Ascending aorta (tissue), 2 donors: ENCODE measurements at regions of chr2 and their contacts with region 1.

Region 1: DNA sequence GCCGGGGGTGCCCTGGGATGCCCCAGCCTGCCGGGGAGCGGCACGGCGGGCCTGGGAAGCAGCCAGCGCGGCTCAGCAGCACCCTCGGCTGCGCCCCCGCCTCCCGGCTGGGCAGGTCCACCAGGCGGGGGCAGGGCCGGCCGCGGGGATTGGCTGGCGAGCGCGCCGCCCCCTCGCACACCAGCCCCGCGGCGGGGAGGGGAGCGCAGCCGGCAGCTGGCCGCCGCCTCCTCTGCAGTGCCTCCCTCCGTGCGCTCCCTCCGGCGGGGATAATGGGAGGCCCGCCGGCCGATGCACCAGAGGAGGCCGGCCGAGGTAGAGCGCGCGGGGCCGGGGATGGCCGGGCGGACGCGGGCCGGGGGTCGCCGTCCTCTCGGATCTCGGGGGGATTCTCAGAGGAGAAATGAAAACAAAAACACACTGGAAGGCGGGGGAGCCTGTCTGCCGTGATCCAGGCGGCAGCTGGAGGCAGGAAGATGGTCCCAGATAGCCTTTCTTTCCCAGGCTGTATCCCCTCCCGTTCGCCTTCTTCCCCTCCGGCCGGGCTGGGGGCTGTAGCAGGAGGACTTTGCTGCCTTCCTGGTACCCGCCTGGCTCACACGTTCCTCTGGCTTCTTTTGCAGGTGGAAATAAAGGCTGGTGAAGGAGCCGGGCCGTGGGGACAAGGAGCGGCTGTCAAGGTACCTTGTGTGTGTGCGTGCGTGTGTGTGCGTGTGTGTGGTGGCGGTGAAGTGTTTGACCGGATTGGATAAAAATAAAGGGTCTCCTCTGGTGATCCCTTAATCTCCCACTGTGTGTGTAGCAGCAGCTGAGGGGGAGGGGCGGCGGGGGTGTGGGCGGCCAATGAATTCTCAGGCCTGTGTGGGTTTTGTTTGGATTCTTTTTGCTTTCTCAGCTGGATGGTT is 18.0 kb downstream of the TET3 start:
- DNase-seq: peak in 1 of 2 donors; percentile 90
- H3K4me3 ChIP-seq: peak overlapping the region; percentile 59 to 69
- H3K27ac ChIP-seq: peak overlapping the region; percentile 28 to 48
- H3K4me1 ChIP-seq: peaks cover 0 to 21% of the 10 kb centered on the region in 2 donors
- H3K27me3 ChIP-seq: no peaks in the 10 kb centered on the region
- CTCF ChIP-seq: peak in 1 of 3 experiments; percentile 30

Region 2: GRCh38 chr2:73985308-73986084 is 17.2 kb before region 1 on chr2:
- intact Hi-C with region 1: loop called (anchors 1 kb)
- DNase-seq: no peak
- H3K4me3 ChIP-seq: peak overlapping the region; percentile 46 to 74
- H3K27ac ChIP-seq: no peak overlapping the region
- H3K4me1 ChIP-seq: peaks cover 6 to 34% of the 10 kb centered on the region in 2 donors
- H3K27me3 ChIP-seq: no peaks in the 10 kb centered on the region
- CTCF ChIP-seq: no peak

Region 3: GRCh38 chr2:74119912-74120825 is 117.4 kb after region 1 on chr2:
- intact Hi-C with region 1: loop called (anchors 5 kb)
- DNase-seq: peak in 1 of 2 donors; percentile 89
- H3K4me3 ChIP-seq: peak overlapping the region; percentile 70 to 78
- H3K27ac ChIP-seq: peak overlapping the region; percentile 84 to 87
- H3K4me1 ChIP-seq: no peaks in the 10 kb centered on the region
- H3K27me3 ChIP-seq: no peaks in the 10 kb centered on the region
- CTCF ChIP-seq: peak; percentile 57 to 79 (median 76)

Region 4: GRCh38 chr2:74391580-74392448 is 389.1 kb after region 1 on chr2:
- intact Hi-C with region 1: loop called (anchors 1 kb)
- DNase-seq: peak; percentile 55 to 93
- H3K4me3 ChIP-seq: peak overlapping the region; percentile 92 to 94
- H3K27ac ChIP-seq: peak overlapping the region; percentile 84 to 89
- H3K4me1 ChIP-seq: peaks cover 13 to 21% of the 10 kb centered on the region in 2 donors
- H3K27me3 ChIP-seq: no peaks in the 10 kb centered on the region
- CTCF ChIP-seq: peak; percentile 88 to 97 (median 94)